ENCODE measurements at regions of chr2 and their contacts with region 1.

Region 1: DNA sequence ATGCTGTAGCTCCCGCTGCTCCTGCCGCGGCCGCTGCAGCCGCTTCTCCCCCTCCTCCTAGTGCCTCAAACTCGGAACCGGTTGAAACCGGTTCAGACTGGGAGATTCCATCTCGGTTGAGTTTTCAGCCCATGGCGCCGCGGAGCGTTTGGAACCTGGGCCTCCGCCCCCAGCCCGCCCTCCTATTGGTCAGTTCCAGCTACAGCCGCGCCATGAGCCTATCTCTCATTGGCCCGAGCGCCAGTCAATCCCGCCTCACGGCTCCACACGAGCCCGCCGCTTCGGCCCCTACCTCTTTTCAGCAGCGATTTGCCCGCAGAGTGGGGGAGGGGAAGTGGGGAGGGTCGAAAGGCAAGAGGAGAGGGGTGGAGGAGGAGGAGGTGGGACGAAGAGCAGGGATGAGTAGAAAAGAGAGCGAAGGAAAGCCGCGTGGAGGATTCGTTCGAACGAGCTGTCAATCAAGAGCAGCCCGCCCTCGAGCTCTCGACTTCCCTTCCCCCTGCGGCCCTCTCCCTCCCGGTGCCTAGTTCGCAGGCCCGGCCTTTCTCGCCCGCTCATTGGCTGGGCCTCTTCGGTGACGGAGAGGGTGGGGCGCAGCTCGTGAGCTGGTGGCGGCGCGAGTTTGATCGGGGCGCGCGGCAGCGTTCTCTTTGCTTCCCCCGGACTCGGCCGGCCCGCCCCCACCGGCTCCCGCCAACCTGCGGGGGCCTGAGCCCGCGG is at the start of gene XPO1:
- DNase-seq: peak; percentile 100
- ATAC-seq: peak; percentile 97
- H3K4me3 ChIP-seq: peak within 1 kb of the TSS; percentile 95 to 99
- H3K27ac ChIP-seq: peak within 1 kb of the TSS; percentile 68 to 99
- H3K4me1 ChIP-seq: no peaks in the 10 kb centered on the region
- H3K27me3 ChIP-seq: no peaks in the 10 kb centered on the region
- total RNA-seq, gene XPO1: 72.7 to 115 TPM

Region 2: GRCh38 chr2:61470965-61471904 is 67.1 kb before region 1 on chr2 and contains the start of gene USP34:
- intact Hi-C with region 1: loop called in 1 of 2 experiments (anchors 2 kb)
- DNase-seq: peak; percentile 97 to 99
- ATAC-seq: peak; percentile 98
- H3K4me3 ChIP-seq: peak within 1 kb of the TSS; percentile 91 to 97
- H3K27ac ChIP-seq: peak within 1 kb of the TSS; percentile 91 to 93
- H3K4me1 ChIP-seq: no peaks in the 10 kb centered on the region
- H3K27me3 ChIP-seq: no peaks in the 10 kb centered on the region
- total RNA-seq, gene USP34: 128 to 146 TPM

Region 3: GRCh38 chr2:61694312-61695274 is 156.2 kb after region 1 on chr2:
- intact Hi-C with region 1: loop called in 1 of 2 experiments (anchors 10 kb)
- DNase-seq: peak; percentile 97 to 98
- ATAC-seq: peak; percentile 100
- H3K4me3 ChIP-seq: peak overlapping the region; percentile 38 to 75
- H3K27ac ChIP-seq: no peak overlapping the region
- H3K4me1 ChIP-seq: no peaks in the 10 kb centered on the region
- H3K27me3 ChIP-seq: no peaks in the 10 kb centered on the region

Region 4: DNA sequence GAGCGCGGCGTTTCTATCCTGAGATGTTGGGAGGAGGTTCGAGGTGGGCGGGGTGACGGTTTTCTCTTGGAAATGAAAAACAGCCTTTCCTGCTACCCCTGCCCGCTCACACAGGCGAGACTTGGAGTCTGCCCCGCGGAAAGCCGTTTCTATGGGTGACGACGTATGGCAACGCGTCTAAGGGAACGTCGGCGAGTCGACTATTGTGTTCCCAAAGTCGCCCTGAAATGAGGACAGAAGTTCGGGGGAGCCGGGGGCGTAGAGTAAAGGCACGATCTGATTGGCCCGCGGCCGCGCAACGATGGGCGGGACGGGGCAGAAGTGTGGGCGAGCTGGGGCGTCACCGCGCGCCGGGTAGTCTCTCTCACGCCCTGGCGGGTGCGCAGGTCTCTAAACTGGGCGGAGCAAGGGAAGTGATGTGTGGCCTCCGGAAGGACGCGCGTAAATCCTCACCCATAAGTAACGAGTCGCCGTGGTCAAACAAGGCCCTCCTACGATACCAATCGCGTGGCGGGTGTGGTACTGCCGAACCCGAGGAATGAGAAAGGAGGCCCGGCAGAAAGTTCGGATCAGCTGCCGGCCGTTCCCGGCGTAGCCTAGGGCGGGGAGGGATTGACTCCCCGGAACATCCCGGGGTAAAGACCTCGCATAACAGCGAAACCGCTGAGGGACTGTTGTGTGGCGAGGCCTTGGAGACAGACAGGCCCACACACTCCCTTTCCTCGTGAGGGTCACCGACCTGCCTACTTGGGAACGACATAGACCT is 225.9 kb after region 1 on chr2:
- intact Hi-C with region 1: loop called (anchors 5 to 10 kb)
- DNase-seq: peak; percentile 98
- ATAC-seq: peak; percentile 99
- H3K4me3 ChIP-seq: peak overlapping the region; percentile 68 to 86
- H3K27ac ChIP-seq: peak overlapping the region; percentile 10 to 97
- H3K4me1 ChIP-seq: no peaks in the 10 kb centered on the region
- H3K27me3 ChIP-seq: no peaks in the 10 kb centered on the region

Region 5: GRCh38 chr2:61854474-61855182 is 316.3 kb after region 1 on chr2:
- intact Hi-C with region 1: loop called (anchors 5 to 10 kb)
- DNase-seq: peak; percentile 91
- ATAC-seq: peak; percentile 96
- H3K4me3 ChIP-seq: peak overlapping the region; percentile 45 to 91
- H3K27ac ChIP-seq: peak overlapping the region in 1 of 2 donors; percentile 13
- H3K4me1 ChIP-seq: no peaks in the 10 kb centered on the region
- H3K27me3 ChIP-seq: no peaks in the 10 kb centered on the region

Region 6: GRCh38 chr2:61888267-61889055 is 350.1 kb after region 1 on chr2 and contains the start of gene CCT4:
- intact Hi-C with region 1: loop called (anchors 10 kb)
- DNase-seq: peak; percentile 92 to 96
- ATAC-seq: peak; percentile 99
- H3K4me3 ChIP-seq: peak within 1 kb of the TSS; percentile 82 to 92
- H3K27ac ChIP-seq: peak within 1 kb of the TSS; percentile 62 to 92
- H3K4me1 ChIP-seq: no peaks in the 10 kb centered on the region
- H3K27me3 ChIP-seq: no peaks in the 10 kb centered on the region
- total RNA-seq, gene CCT4: 78.8 to 99.1 TPM

Measured in aorta (tissue), 5 donors.